CD14-positive monocyte (primary cell): ENCODE measurements at regions of chr11 and their contacts with region 1.

Region 1: DNA sequence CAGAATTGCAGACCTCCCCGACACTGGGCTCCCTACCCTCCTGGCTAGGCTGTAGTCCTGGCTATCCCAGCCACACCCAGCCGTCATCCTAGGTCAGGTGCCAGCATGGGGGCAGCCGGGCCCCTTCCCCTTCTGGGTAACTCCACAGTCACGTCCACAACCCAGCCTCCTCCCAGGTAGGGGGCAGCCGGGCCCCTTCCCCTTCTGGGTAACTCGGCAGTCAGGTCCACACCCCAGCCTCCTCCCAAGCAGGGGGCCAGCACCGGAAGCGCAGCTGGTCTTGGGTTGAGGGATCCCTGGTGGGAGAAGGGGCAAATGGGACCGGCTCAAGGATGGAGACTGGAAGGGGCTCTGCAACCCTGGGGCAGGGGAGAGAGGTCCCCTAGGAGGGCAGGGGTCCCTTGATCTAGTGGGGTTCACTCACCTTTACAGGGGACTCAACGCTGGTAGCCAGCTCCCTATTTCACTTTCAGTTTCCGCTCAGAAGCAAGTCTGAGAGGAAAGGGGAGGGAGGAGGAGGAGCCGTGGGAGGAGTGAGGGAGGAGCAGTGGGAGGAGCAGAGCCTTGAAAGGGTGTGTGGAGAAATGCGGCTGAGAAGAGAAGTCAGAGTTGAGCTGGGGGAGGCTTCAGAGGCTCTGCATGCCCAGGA is at the start of gene TRIM21:
- DNase-seq: peak; percentile 86 to 89 (median 88)
- H3K4me3 ChIP-seq: peak within 1 kb of the TSS; percentile 66 to 99 (median 87)
- H3K4me3 Mint-ChIP-seq: peak within 1 kb of the TSS; percentile 91 to 95
- H3K27ac ChIP-seq: peak within 1 kb of the TSS; percentile 79 to 99
- H3K27ac Mint-ChIP-seq: peak within 1 kb of the TSS; percentile 92 to 95 (median 94)
- H3K4me1 ChIP-seq: peaks cover 19 to 43% of the 10 kb centered on the region in 2 donors
- H3K4me1 Mint-ChIP-seq: peaks cover 53% of the 10 kb centered on the region
- H3K27me3 ChIP-seq: no peaks in the 10 kb centered on the region
- H3K27me3 Mint-ChIP-seq: peaks cover 0 to 1% (median 0%) of the 10 kb centered on the region in 3 donors
- CTCF ChIP-seq: no peak
- polyA plus RNA-seq, gene TRIM21: 16.8 to 42.5 (median 29.9) TPM

Region 2: DNA sequence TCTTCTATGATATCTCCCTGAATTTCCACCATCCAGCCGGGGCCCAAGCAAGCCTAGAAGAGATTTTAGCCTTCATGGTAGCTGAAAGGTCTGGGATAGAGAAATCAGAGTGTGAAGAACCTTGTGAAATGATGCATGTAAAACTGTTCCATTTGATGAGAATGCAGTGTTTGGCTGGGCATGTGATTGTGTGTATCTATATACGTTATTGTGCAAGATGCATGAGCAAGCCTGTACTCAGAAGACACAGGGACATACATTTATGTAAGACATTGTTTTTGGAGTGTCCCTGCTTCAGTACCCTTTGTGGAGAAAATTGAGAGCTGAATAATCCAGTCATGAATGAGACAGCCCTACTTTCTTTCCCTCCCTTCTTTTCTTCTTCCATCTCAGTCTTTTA is 40.5 kb after region 1 on chr11:
- intact Hi-C with region 1: no loop called
- DNase-seq: peak; percentile 73 to 89 (median 80)
- H3K4me3 ChIP-seq: peak overlapping the region in 1 of 3 experiments; percentile 22
- H3K4me3 Mint-ChIP-seq: peak overlapping the region in 1 of 2 donors; percentile 6
- H3K27ac ChIP-seq: peak overlapping the region; percentile 55 to 82
- H3K27ac Mint-ChIP-seq: peak overlapping the region; percentile 87 to 93 (median 89)
- H3K4me1 ChIP-seq: peaks cover 52 to 66% of the 10 kb centered on the region in 2 donors
- H3K4me1 Mint-ChIP-seq: peaks cover 65% of the 10 kb centered on the region
- H3K27me3 ChIP-seq: no peaks in the 10 kb centered on the region
- H3K27me3 Mint-ChIP-seq: no peaks in the 10 kb centered on the region
- CTCF ChIP-seq: no peak

Region 3: GRCh38 chr11:4459500-4459899 is 66.2 kb after region 1 on chr11:
- intact Hi-C with region 1: loop called (anchors 10 kb)
- DNase-seq: peak; percentile 71 to 88 (median 79)
- H3K4me3 ChIP-seq: peak overlapping the region in 1 of 3 experiments; percentile 7
- H3K4me3 Mint-ChIP-seq: no peak overlapping the region
- H3K27ac ChIP-seq: peak overlapping the region; percentile 43 to 86
- H3K27ac Mint-ChIP-seq: peak overlapping the region; percentile 73 to 90 (median 84)
- H3K4me1 ChIP-seq: peaks cover 58 to 62% of the 10 kb centered on the region in 2 donors
- H3K4me1 Mint-ChIP-seq: peaks cover 62% of the 10 kb centered on the region
- H3K27me3 ChIP-seq: no peaks in the 10 kb centered on the region
- H3K27me3 Mint-ChIP-seq: peaks cover 0 to 5% (median 2%) of the 10 kb centered on the region in 3 donors
- CTCF ChIP-seq: no peak

Region 4: GRCh38 chr11:4493480-4493818 is 100.1 kb after region 1 on chr11:
- intact Hi-C with region 1: loop called in 1 of 2 experiments (anchors 5 kb)
- DNase-seq: no peak
- H3K4me3 ChIP-seq: no peak overlapping the region
- H3K4me3 Mint-ChIP-seq: no peak overlapping the region
- H3K27ac ChIP-seq: no peak overlapping the region
- H3K27ac Mint-ChIP-seq: no peak overlapping the region
- H3K4me1 ChIP-seq: peaks cover 7 to 11% of the 10 kb centered on the region in 2 donors
- H3K4me1 Mint-ChIP-seq: peaks cover 16% of the 10 kb centered on the region
- H3K27me3 ChIP-seq: peaks cover 3 to 4% of the 10 kb centered on the region in 2 donors
- H3K27me3 Mint-ChIP-seq: peaks cover 9 to 18% (median 12%) of the 10 kb centered on the region in 3 donors
- CTCF ChIP-seq: peak; percentile 37